KBM-7 (cell line): ENCODE measurements at regions of chr5 and their contacts with region 1.

Region 1: DNA sequence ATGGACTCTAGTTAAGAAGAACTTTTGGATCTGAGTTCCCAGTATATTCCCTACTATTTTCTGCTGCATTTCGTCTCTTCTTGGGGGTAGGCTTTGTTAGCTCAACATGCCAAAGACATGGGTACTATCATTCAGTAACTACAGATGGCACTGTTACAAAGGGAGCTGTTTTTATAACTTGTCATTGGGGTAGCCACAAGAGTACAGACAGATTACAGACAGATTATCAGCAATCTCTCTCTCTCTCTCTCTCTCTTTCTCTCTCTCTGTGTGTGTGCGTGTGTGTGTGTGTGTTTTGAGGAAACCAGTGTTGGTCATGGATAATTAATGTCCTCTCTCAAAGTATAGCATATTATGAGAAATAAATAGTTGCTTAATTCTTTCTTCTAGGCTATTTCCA is 116.1 kb downstream of the WDR70 start:
- DNase-seq: peak; percentile 39

Region 2: DNA sequence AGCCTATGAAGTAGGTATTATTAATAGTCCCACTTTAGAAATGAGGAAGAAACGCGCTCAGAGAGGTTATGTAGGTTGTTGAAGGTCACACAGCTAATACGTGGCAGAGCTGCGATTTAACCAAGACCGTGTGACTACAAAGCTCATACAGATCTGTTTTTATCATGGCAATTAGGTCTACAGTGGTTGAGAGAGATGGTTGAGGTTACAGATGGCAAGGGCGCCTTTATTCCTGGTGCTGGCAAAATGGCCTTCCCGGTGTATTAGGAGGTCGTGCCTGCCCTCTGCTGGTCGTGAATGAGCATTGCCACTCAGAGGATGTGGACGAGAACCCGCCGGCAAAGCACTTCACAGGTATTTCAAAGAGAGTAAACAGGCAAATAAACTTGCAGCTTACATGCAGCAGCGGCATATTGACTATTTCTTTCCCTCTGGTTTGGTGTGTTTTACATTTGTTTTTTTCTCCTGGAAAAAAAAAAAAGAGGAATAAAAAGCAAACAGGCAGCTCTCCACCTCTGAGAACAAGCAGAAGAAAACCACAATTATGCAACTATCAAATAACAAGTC is 697.9 kb after region 1 on chr5:
- in situ Hi-C with region 1: loop called (anchors 25 kb)
- DNase-seq: peak; percentile 71